WTC11 (cell line): ENCODE measurements at regions of chr17 and their contacts with region 1.

Region 1: DNA sequence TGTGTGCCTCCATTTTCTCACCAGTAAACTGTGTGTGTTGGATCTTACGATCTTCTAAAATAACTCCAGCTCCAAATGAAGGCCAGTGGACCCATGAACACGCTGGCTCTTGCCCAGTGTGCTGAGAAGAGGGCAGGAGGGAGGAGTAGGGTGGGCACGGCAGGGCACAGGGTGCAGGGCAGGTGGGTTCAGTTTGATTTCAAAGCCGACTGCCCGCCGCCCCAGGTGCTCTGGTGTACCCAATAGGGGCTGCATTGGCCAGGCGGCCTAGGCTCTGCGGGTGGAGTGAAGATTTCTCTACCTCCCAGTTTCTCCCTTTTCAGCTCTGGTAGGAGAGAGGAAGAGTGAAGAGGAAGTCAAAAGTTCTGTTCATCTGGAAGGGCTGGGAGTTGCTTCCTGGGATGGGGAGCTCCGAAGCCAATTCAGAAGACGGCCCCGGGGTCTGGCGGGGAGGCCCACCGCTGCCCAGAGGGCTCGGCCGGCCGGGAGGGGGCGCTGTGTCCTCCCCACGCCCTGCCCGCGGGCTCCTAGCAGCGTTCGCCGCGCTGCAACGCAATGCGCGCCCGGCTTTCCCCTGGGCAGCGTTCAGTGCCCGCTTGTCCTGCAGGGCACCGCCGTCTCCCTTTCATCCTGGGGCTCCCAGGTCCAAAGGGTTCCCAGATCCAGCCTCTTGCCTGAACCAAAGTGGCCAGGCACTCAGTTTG is 1.1 kb upstream of the CRHR1 start:
- DNase-seq: peak; percentile 80
- ATAC-seq: peak; percentile 58
- H3K4me3 Mint-ChIP-seq: peak overlapping the region; percentile 87
- H3K27ac Mint-ChIP-seq: no peak overlapping the region
- H3K4me1 Mint-ChIP-seq: peaks cover 43% of the 10 kb centered on the region
- H3K27me3 Mint-ChIP-seq: peaks cover 65% of the 10 kb centered on the region
- CTCF ChIP-seq: peak; percentile 83

Region 2: GRCh38 chr17:45640141-45640850 is 142.7 kb before region 1 on chr17:
- CTCF ChIA-PET with region 1: interaction called, 32 read pairs
- POLR2A ChIA-PET with region 1: no interaction called
- DNase-seq: peak; percentile 91
- ATAC-seq: peak; percentile 93
- H3K4me3 Mint-ChIP-seq: no peak overlapping the region
- H3K27ac Mint-ChIP-seq: no peak overlapping the region
- H3K4me1 Mint-ChIP-seq: no peaks in the 10 kb centered on the region
- H3K27me3 Mint-ChIP-seq: no peaks in the 10 kb centered on the region
- CTCF ChIP-seq: peak; percentile 93

Region 3: GRCh38 chr17:45709728-45710288 is 73.2 kb before region 1 on chr17:
- CTCF ChIA-PET with region 1: interaction called, 12 read pairs
- POLR2A ChIA-PET with region 1: no interaction called
- DNase-seq: peak; percentile 32
- ATAC-seq: peak; percentile 81
- H3K4me3 Mint-ChIP-seq: no peak overlapping the region
- H3K27ac Mint-ChIP-seq: no peak overlapping the region
- H3K4me1 Mint-ChIP-seq: peaks cover 20% of the 10 kb centered on the region
- H3K27me3 Mint-ChIP-seq: no peaks in the 10 kb centered on the region
- CTCF ChIP-seq: no peak

Region 4: DNA sequence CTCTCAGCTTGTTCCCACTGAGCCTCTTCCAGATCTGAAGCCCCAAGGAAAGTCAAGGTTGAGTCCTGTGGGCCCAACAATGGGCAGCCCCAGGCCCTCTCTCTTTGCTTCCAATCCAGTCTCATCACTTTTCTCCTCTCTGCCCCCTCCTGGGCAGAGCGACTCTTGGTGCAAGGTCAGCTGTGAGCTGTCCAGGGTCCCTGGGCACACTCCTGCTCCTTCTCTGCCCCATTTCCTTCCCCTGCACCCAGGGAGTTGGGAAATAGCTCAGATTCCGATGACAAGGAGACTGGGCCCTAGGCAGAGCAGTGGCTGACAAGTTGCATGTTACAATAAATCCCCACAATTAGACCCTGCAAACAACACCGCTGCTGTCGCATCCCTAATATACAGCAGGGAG is 15.0 kb before region 1 on chr17:
- CTCF ChIA-PET with region 1: interaction called, 96 read pairs
- POLR2A ChIA-PET with region 1: interaction called, 6 read pairs
- DNase-seq: peak; percentile 51
- ATAC-seq: peak; percentile 80
- H3K4me3 Mint-ChIP-seq: no peak overlapping the region
- H3K27ac Mint-ChIP-seq: no peak overlapping the region
- H3K4me1 Mint-ChIP-seq: peaks cover 27% of the 10 kb centered on the region
- H3K27me3 Mint-ChIP-seq: no peaks in the 10 kb centered on the region
- CTCF ChIP-seq: no peak

Region 5: GRCh38 chr17:45812102-45812501 is 29.1 kb after region 1 on chr17:
- CTCF ChIA-PET with region 1: interaction called, 103 read pairs
- POLR2A ChIA-PET with region 1: no interaction called
- DNase-seq: no peak
- ATAC-seq: peak; percentile 30
- H3K4me3 Mint-ChIP-seq: no peak overlapping the region
- H3K27ac Mint-ChIP-seq: no peak overlapping the region
- H3K4me1 Mint-ChIP-seq: peaks cover 14% of the 10 kb centered on the region
- H3K27me3 Mint-ChIP-seq: no peaks in the 10 kb centered on the region; the same call in 1 of the 2 replicates
- CTCF ChIP-seq: no peak

Region 6: GRCh38 chr17:45833920-45834319 is 50.9 kb after region 1 on chr17:
- CTCF ChIA-PET with region 1: interaction called, 54 read pairs
- POLR2A ChIA-PET with region 1: no interaction called
- DNase-seq: no peak
- ATAC-seq: no peak
- H3K4me3 Mint-ChIP-seq: no peak overlapping the region
- H3K27ac Mint-ChIP-seq: no peak overlapping the region
- H3K4me1 Mint-ChIP-seq: 0 out of 2 replicates have a peak, but pooled peaks cover 5% of the 10 kb centered on the region
- H3K27me3 Mint-ChIP-seq: no peaks in the 10 kb centered on the region
- CTCF ChIP-seq: no peak